A549 (cell line): ENCODE measurements at regions of chr1 and their contacts with region 1.

Region 1: GRCh38 chr1:167681451-167682098 is 40.2 kb upstream of the MPZL1 start:
- DNase-seq: no peak
- ATAC-seq: no peak
- H3K4me3 ChIP-seq: no peak overlapping the region
- H3K27ac ChIP-seq: no peak overlapping the region
- H3K4me1 ChIP-seq: no peaks in the 10 kb centered on the region
- CTCF ChIP-seq: no peak
- EP300 ChIP-seq: no peak
- POLR2A ChIP-seq: no peak
- RAD21 ChIP-seq: no peak

Region 2: DNA sequence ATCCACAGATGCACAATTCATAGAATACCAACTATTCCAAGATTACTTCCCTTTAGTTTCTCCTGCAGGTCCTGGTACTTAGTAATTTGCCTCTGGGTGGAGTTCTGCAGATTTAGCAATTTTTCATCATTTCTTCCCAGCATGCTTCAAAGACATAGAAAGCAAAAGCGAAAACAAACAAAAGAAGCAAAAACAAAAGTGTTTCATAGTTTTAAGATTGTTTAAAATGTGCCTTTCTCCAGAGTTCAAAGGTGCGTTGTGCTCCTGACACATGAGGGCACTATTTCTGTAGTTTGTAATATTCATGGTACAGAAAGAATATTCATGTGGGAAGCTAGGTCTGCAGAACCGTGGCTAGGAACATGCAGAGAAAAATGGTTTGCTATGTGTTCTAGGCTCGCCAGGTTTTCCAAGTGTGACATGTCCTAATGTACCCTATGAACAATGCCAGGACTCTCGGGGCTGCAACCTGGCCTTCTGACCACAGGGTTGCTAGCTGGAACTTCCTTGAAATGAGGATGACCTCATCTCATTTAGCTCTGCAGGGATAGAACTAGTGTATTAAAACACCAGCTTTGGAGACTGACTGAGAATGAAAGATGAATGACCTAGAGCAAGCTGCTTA is 81.5 kb before region 1 on chr1:
- CTCF ChIA-PET with region 1: interaction called, 115 read pairs
- POLR2A ChIA-PET with region 1: no interaction called
- DNase-seq: peak in 1 of 2 experiments; percentile 42
- ATAC-seq: peak; percentile 86 to 87
- H3K4me3 ChIP-seq: no peak overlapping the region
- H3K27ac ChIP-seq: 0 out of 6 replicates have a peak overlapping the region, but pooled peaks of 1 of the 2 experiments have one; percentile 0
- H3K4me1 ChIP-seq: peaks cover 15% of the 10 kb centered on the region; the same call in 2 of the 3 replicates
- CTCF ChIP-seq: peak; percentile 71
- EP300 ChIP-seq: no peak
- POLR2A ChIP-seq: no peak
- RAD21 ChIP-seq: peak; percentile 81 to 82

Region 3: GRCh38 chr1:167899253-167899681 is 217.7 kb after region 1 on chr1:
- CTCF ChIA-PET with region 1: no interaction called
- POLR2A ChIA-PET with region 1: no interaction called
- DNase-seq: no peak
- ATAC-seq: no peak
- H3K4me3 ChIP-seq: no peak overlapping the region
- H3K27ac ChIP-seq: no peak overlapping the region
- H3K4me1 ChIP-seq: peaks cover 2% of the 10 kb centered on the region; the same call in 2 of the 3 replicates
- CTCF ChIP-seq: no peak
- EP300 ChIP-seq: no peak
- POLR2A ChIP-seq: no peak
- RAD21 ChIP-seq: no peak